A673 (cell line): ENCODE measurements at regions of chr10 and their contacts with region 1.

Region 1: GRCh38 chr10:45544191-45544590 is 128.4 kb downstream of the ZFAND4 start:
- DNase-seq: no peak
- H3K4me3 ChIP-seq: no peak overlapping the region
- H3K27ac ChIP-seq: no peak overlapping the region
- H3K4me1 ChIP-seq: no peaks in the 10 kb centered on the region
- H3K27me3 ChIP-seq: no peaks in the 10 kb centered on the region
- CTCF ChIP-seq: no peak

Region 2: DNA sequence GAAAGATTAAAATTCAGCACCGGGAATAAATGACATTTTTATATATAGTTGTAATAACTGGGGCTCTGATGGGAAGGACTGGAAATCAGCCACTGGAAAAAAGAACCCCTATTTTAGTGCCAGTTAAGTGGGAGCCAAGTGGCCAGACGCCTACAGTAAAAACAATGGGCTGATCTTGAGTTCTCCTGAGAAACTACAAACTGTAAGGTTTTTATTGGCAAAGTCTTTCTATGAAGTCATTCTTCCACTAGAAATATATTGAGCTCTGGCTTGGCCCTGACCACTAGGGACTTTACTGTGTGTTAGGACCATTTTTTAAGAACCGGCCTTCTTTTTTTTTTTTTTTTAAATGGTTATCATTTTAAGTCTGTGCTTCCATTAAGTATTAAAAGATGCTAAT is 463.9 kb before region 1 on chr10:
- CTCF ChIA-PET with region 1: no interaction called
- POLR2A ChIA-PET with region 1: no interaction called
- intact Hi-C with region 1: no loop called
- DNase-seq: no peak
- H3K4me3 ChIP-seq: no peak overlapping the region
- H3K27ac ChIP-seq: no peak overlapping the region
- H3K4me1 ChIP-seq: peaks cover 25% of the 10 kb centered on the region
- H3K27me3 ChIP-seq: no peaks in the 10 kb centered on the region
- CTCF ChIP-seq: no peak

Region 3: GRCh38 chr10:45373576-45374349 is 170.4 kb before region 1 on chr10 and contains the start of gene ALOX5:
- CTCF ChIA-PET with region 1: no interaction called
- POLR2A ChIA-PET with region 1: no interaction called
- intact Hi-C with region 1: no loop called
- DNase-seq: no peak
- H3K4me3 ChIP-seq: no peak within 1 kb of the TSS
- H3K27ac ChIP-seq: no peak within 1 kb of the TSS
- H3K4me1 ChIP-seq: no peaks in the 10 kb centered on the region
- H3K27me3 ChIP-seq: peaks cover 76% of the 10 kb centered on the region
- CTCF ChIP-seq: no peak
- total RNA-seq, gene ALOX5: not detected in 2 replicates

Region 4: DNA sequence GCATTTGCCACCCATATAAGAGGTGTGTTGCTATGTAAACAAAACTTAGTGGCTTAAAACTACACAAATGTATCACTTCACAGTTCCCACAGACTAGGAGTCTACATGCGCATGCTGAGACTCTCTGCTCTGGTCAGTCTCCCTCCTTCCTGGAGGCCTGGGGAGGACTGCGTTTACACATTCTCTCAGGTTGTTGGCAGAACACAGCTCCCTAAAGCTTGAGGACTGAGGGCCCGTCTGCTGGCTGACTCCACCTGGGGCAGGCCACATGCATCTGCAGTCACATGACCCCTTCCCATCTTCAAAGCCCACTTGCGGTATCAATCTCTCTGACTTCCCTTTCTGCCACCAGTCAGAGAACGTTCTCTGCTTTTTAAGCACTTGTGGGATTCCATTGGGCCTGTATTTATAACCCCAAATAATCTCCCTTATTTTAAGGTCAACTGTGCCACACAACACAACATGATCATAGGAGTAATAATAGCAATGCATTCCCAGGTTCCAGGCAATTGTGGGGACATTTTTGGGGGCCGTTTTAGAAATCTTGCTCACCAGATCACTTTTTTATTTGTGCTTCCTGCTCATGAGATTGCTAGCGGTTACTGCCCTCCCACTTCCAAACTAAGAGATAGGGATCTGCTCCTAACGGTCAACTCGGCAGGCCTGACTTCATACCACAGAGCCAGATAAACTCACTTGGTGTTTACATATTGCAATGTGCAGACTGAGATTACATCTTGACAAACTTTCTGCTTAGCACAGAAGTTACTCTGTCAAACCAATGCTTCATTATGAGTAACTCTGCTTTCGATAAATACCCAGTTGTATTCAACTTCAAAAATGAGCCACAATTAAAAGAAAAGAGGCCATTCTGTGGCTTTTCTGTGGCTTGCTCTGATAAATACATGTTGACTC is 73.8 kb before region 1 on chr10:
- CTCF ChIA-PET with region 1: no interaction called
- POLR2A ChIA-PET with region 1: no interaction called
- intact Hi-C with region 1: no loop called
- DNase-seq: no peak
- H3K4me3 ChIP-seq: no peak overlapping the region
- H3K27ac ChIP-seq: no peak overlapping the region
- H3K4me1 ChIP-seq: no peaks in the 10 kb centered on the region
- H3K27me3 ChIP-seq: no peaks in the 10 kb centered on the region
- CTCF ChIP-seq: no peak

Region 5: DNA sequence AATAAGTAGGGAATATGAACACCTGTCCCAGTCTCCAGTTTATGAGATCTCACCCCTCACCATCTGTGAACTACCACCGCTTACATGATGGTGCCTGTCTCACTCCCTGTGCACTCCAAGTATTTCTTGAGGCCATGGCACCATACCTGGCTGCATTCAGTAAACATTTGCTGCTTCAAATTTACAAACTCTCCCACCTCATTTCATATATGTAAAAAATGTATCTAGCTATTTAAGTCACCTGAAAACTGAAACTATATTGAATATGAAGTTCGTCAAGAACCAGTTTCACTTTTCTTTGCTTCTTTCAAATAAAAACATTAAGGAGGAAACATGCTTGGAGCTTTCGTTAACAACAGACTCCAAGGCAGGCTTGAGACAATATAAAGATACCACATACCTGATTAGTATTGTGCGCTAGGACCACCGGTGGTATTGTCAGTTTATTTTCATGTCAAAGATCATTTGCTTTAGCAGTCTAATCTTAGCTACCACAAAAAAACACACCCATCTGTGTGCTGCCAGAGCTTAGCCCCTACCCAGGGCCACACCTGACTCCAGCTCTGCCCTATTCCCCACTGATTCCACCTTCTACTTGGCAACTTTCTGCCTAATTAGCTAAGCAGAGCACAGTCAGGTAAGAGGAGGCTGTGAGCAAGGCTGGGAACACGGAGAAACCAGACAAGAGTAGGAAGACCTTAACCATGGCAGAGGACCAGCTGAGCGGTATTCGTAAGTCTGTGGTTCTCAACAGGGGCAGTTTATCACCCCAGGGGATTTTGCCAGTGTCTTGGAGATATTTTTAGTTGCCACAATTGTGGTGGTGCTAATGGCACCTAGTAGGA is 36.4 kb after region 1 on chr10:
- CTCF ChIA-PET with region 1: no interaction called
- POLR2A ChIA-PET with region 1: interaction called, 11 read pairs
- intact Hi-C with region 1: no loop called
- DNase-seq: no peak
- H3K4me3 ChIP-seq: no peak overlapping the region
- H3K27ac ChIP-seq: no peak overlapping the region
- H3K4me1 ChIP-seq: no peaks in the 10 kb centered on the region
- H3K27me3 ChIP-seq: no peaks in the 10 kb centered on the region
- CTCF ChIP-seq: no peak